Adrenal gland (tissue), 19 donors: ENCODE measurements at regions of chr2 and their contacts with region 1.

Region 1: GRCh38 chr2:134245340-134245984 is 8.4 kb upstream of the MGAT5 start:
- DNase-seq: peak; percentile 73 to 94 (median 85)
- H3K4me3 ChIP-seq: no peak overlapping the region
- H3K27ac ChIP-seq: no peak overlapping the region
- H3K4me1 ChIP-seq: peaks cover 0 to 7% of the 10 kb centered on the region in 2 donors
- H3K27me3 ChIP-seq: no peaks in the 10 kb centered on the region
- CTCF ChIP-seq: peak; percentile 63 to 87 (median 78)
- POLR2A ChIP-seq: no peak

Region 2: GRCh38 chr2:133886735-133887660 is 358.5 kb before region 1 on chr2:
- intact Hi-C with region 1: loop called in 1 of 2 experiments (anchors 10 kb)
- DNase-seq: peak; percentile 65 to 91 (median 82)
- H3K4me3 ChIP-seq: no peak overlapping the region
- H3K27ac ChIP-seq: no peak overlapping the region
- H3K4me1 ChIP-seq: no peaks in the 10 kb centered on the region
- H3K27me3 ChIP-seq: no peaks in the 10 kb centered on the region
- CTCF ChIP-seq: peak; percentile 52 to 78 (median 66)
- POLR2A ChIP-seq: no peak

Region 3: GRCh38 chr2:134189009-134189720 is 56.3 kb before region 1 on chr2:
- intact Hi-C with region 1: no loop called
- DNase-seq: peak in 3 of 7 donors; percentile 33 to 54 (median 50)
- H3K4me3 ChIP-seq: no peak overlapping the region
- H3K27ac ChIP-seq: peak overlapping the region in 2 of 5 donors; percentile 13 to 73
- H3K4me1 ChIP-seq: peaks cover 11 to 26% of the 10 kb centered on the region in 2 donors
- H3K27me3 ChIP-seq: no peaks in the 10 kb centered on the region
- CTCF ChIP-seq: no peak
- POLR2A ChIP-seq: no peak

Region 4: GRCh38 chr2:134391751-134392160 is 146.3 kb after region 1 on chr2:
- intact Hi-C with region 1: no loop called
- DNase-seq: no peak
- H3K4me3 ChIP-seq: no peak overlapping the region
- H3K27ac ChIP-seq: no peak overlapping the region
- H3K4me1 ChIP-seq: no peaks in the 10 kb centered on the region
- H3K27me3 ChIP-seq: no peaks in the 10 kb centered on the region
- CTCF ChIP-seq: no peak
- POLR2A ChIP-seq: no peak

Region 5: GRCh38 chr2:134402410-134402809 is 156.9 kb after region 1 on chr2:
- intact Hi-C with region 1: loop called (anchors 10 kb)
- DNase-seq: peak in 3 of 7 donors; percentile 10 to 45 (median 18)
- H3K4me3 ChIP-seq: no peak overlapping the region
- H3K27ac ChIP-seq: no peak overlapping the region
- H3K4me1 ChIP-seq: peaks cover 0 to 13% of the 10 kb centered on the region in 2 donors
- H3K27me3 ChIP-seq: no peaks in the 10 kb centered on the region
- CTCF ChIP-seq: no peak
- POLR2A ChIP-seq: no peak